Activated T-helper 1 cell treated with anti-CD3 and anti-CD28 coated beads, Interleukin-12 subunit alpha, Interleukin-12 subunit beta, Interleukin-2, Interleukin-4 antibody, amounts not matched to agents 30 ng/mL and 10 ng/mL and 1 ng/mL, durations not matched to agents 14 hours and 24 hours and 36 hours (primary cell): ENCODE measurements at regions of chr6 and their contacts with region 1.

Region 1: DNA sequence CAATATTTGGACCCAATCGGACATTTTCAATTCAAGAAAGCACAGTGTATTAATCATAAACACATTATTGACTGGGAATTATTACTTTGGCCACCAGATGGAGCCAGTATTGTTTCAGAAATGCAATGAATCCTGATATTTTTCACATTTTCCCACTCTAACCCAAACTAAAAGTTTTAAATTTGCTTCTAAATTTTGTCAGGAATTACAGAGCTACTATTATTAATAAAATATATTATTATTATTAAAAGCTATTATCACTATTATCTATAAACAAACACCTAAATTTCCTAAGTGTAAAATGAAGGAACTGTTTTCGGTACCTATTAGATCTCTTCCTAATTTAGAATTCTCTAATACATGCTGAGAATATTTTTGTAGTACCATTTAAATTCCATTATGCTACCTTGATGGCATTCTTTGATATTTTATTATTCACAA is 245.3 kb downstream of the OGFRL1 start:
- DNase-seq: no peak
- H3K4me3 Mint-ChIP-seq: no peak overlapping the region
- H3K27ac Mint-ChIP-seq: no peak overlapping the region
- H3K4me1 Mint-ChIP-seq: no peaks in the 10 kb centered on the region
- H3K27me3 Mint-ChIP-seq: no peaks in the 10 kb centered on the region

Region 2: DNA sequence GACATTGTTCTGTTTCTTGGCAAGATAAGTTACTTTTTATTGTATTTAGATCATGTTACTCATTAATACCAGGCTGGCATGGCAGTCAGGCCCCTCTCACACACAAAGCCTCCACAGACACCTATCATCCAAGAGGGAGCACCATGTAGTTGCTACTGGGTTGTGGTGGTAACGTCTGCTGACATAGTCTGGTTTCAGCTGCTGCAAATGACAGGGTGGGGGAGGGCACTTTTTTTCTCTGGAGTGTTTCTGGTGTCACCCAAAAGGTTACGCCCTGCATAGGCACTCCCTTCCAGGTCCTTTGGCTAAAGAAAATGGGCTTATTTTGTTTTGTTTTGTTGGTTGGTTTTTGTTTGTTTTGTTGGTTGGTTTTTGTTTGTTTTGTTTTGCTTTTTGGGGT is 116.0 kb after region 1 on chr6:
- intact Hi-C with region 1: no loop called
- DNase-seq: no peak
- H3K4me3 Mint-ChIP-seq: no peak overlapping the region
- H3K27ac Mint-ChIP-seq: no peak overlapping the region
- H3K4me1 Mint-ChIP-seq: no peaks in the 10 kb centered on the region
- H3K27me3 Mint-ChIP-seq: no peaks in the 10 kb centered on the region

Region 3: GRCh38 chr6:72084992-72085569 is 551.1 kb after region 1 on chr6:
- intact Hi-C with region 1: loop called (anchors 1 kb)
- DNase-seq: no peak
- H3K4me3 Mint-ChIP-seq: no peak overlapping the region
- H3K27ac Mint-ChIP-seq: no peak overlapping the region
- H3K4me1 Mint-ChIP-seq: no peaks in the 10 kb centered on the region
- H3K27me3 Mint-ChIP-seq: peaks cover 3% of the 10 kb centered on the region